AG04449 (cell line): ENCODE measurements at regions of chr20 and their contacts with region 1.

Region 1: DNA sequence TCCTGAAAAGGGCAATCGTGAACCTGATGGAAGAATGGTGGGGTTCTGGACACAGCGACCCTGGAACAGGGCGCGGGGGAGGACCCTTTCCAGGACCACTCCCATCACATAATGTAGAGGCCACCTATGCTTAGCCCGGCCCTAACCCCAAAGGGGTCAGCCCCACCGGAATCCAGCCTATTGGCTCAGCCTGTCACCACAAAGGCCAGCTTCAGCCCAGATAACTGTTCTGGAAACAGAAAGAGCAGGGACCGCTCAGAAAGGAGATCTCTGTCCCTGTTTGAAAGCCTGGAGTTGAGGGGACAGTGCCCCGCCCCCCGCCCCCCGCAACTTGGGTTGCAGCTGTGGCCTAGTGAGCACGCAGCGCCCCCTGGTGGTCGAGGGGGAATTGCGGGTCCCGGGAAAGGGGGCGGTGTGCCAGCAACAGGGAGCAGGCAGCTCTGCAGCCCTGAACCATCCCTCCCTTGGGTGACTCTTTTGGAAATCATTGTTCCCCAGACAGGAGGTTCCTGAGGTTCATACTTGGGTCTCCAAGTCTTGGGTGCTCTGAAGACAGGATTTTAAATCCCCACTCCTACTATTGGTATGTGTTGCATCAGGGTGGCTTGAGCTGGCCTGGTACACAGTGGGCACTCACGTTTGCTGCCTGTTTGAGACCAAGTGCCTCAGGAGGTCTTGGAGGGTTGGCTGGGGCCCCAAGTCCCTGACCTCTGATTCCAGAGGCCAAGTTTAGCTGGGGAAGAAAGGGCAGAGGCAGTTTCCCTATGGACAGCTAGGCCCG is 1.5 kb downstream of the SIGLEC1 start:
- DNase-seq: no peak
- H3K4me3 ChIP-seq: no peak overlapping the region
- CTCF ChIP-seq: peak; percentile 94

Region 2: GRCh38 chr20:3686867-3687321 is 24.0 kb before region 1 on chr20:
- CTCF ChIA-PET with region 1: interaction called, 1,151 read pairs
- POLR2A ChIA-PET with region 1: no interaction called
- DNase-seq: peak; percentile 79
- H3K4me3 ChIP-seq: peak overlapping the region; percentile 23; the same call in 1 of the 2 replicates
- CTCF ChIP-seq: no peak

Region 3: DNA sequence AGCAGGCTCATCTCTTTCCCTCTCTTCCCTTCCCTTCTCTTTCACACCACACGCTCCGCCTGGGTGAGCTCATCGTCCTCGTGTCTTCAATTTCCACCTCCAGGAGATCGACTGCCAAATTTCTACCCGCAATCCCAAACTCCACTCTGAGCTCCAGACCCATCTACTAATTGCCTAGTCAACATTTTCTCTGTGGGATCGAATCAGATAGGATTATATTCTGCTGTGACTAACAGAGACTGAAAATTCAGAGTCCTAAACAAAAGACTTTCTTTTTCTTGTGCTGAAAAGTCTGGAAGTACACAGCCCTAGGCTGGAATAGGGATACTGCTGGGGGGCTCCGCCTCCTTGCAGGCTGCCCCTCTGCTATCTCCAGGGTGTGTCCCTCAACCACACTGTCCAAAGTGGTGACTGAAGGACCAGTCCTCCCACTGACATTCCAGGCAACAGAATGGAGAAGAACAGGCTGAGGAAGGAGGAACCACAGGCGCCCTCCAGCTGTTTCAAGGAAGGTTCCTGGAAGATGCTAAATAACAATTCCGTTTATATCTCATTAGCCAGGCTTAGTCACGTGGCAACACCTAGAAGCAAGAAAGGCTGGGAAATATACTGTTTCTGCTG is 16.6 kb after region 1 on chr20:
- CTCF ChIA-PET with region 1: interaction called, 41 read pairs
- POLR2A ChIA-PET with region 1: no interaction called
- DNase-seq: peak; percentile 10
- H3K4me3 ChIP-seq: peak overlapping the region; percentile 19
- CTCF ChIP-seq: no peak

Region 4: GRCh38 chr20:3744806-3745685 is 34.2 kb after region 1 on chr20:
- CTCF ChIA-PET with region 1: interaction called, 22 read pairs
- POLR2A ChIA-PET with region 1: no interaction called
- DNase-seq: no peak
- H3K4me3 ChIP-seq: no peak overlapping the region
- CTCF ChIP-seq: no peak

Region 5: DNA sequence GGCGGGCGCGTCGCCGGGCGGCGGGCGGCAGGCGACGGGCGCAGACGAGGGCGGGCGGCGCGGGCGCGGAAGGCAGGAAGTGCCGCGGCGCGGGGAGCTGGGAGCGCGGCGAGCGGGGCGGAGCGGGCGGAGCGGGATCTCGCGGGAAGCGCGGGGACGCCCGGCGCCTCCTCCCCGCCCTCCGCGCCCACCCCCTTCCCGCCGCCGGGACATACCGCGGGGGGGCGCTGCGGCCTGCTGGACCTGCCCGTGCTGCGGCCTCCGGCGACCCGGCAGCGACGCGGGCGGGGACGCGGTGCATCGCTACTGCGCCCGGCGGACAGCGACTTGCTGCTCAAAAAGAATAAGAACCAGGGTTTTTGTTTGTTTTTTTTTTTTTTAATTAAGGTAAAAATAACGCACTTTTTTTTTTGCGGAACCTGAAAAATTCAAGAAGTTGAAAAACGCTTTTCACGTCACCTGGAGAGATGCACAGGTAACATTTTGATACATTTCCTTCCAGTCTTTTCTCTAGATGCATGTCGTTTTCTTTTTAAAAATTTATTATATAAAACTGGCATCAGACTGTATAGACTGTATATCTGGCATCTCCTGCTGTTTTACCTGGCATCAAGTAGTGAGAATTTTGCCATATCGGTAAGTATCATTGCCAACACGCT is 75.9 kb after region 1 on chr20 and contains the start of gene CENPB:
- CTCF ChIA-PET with region 1: interaction called, 10 read pairs
- POLR2A ChIA-PET with region 1: no interaction called
- DNase-seq: no peak
- H3K4me3 ChIP-seq: peak within 1 kb of the TSS; percentile 80
- CTCF ChIP-seq: peak; percentile 70

Region 6: GRCh38 chr20:4038047-4038459 is 327.2 kb after region 1 on chr20:
- CTCF ChIA-PET with region 1: no interaction called
- POLR2A ChIA-PET with region 1: no interaction called
- DNase-seq: no peak
- H3K4me3 ChIP-seq: no peak overlapping the region
- CTCF ChIP-seq: no peak